ENCODE measurements at regions of chr22 and their contacts with region 1.

Region 1: GRCh38 chr22:38201710-38202436 is at the start of gene MAFF:
- DNase-seq: peak; percentile 99
- H3K4me3 ChIP-seq: peak within 1 kb of the TSS; percentile 80 to 92 (median 86)
- H3K27ac ChIP-seq: peak within 1 kb of the TSS; percentile 97 to 100 (median 98)
- H3K4me1 ChIP-seq: peaks cover 0 to 41% (median 37%) of the 10 kb centered on the region in 4 donors
- H3K27me3 ChIP-seq: no peaks in the 10 kb centered on the region
- CTCF ChIP-seq: no peak
- EP300 ChIP-seq: peak in 2 of 4 donors; percentile 46 to 51
- POLR2A ChIP-seq: peak; percentile 88 to 90
- total RNA-seq, gene MAFF: 15.3 to 104 (median 26.1) TPM

Region 2: DNA sequence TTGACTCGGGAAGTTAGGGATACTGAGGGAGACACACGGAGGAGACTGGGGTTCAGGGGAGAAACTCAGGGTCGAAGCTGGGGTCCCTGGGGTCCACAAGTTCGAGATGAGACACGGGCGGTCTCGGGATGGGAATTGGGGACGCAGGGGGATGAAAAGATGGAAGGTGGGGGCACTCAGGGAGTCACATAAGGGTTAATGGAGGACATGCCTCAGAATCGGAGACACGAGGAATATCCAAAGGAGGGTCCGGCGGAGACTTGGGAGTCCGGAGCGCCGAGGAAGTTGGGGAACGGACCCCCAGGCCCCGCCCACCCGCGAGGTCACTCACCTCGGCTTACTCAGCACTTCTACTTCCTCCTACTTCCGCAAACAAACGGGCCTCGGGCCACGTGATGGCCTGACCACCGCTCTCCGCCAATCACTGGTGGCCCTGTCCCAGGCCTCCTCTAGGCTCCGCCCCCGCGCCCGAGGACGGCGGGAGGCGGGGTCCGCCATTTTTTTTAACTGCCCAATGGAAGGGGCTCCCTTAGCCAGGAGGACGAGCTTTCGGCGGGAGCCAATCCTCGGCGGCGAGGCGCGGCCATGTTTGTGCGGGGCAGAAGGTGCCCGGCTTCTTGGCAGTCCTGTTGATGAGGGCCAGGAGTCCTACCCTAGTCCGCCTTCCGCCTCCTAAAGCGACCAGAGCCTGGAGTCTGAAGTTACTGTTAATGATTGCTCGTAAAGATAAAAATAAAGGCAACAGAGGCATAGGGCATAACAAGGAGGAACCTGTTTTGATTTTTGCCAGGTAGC is 20.2 kb before region 1 on chr22 and contains the start of gene PLA2G6:
- intact Hi-C with region 1: loop called (anchors 2 kb)
- DNase-seq: peak; percentile 99
- H3K4me3 ChIP-seq: peak within 1 kb of the TSS; percentile 36 to 64 (median 58)
- H3K27ac ChIP-seq: peak within 1 kb of the TSS; percentile 79 to 92 (median 87)
- H3K4me1 ChIP-seq: peaks cover 0 to 31% (median 29%) of the 10 kb centered on the region in 4 donors
- H3K27me3 ChIP-seq: no peaks in the 10 kb centered on the region
- CTCF ChIP-seq: no peak
- EP300 ChIP-seq: peak in 1 of 4 donors; percentile 37
- POLR2A ChIP-seq: no peak
- total RNA-seq, gene PLA2G6: 10.7 to 36.2 (median 26.5) TPM

Region 3: GRCh38 chr22:38272373-38273134 is 70.7 kb after region 1 on chr22 and contains the start of gene TMEM184B:
- intact Hi-C with region 1: loop called (anchors 5 kb)
- DNase-seq: peak; percentile 89
- H3K4me3 ChIP-seq: peak within 1 kb of the TSS; percentile 76 to 99 (median 94)
- H3K27ac ChIP-seq: peak within 1 kb of the TSS; percentile 87 to 97 (median 92)
- H3K4me1 ChIP-seq: peaks cover 0 to 53% (median 49%) of the 10 kb centered on the region in 4 donors
- H3K27me3 ChIP-seq: no peaks in the 10 kb centered on the region
- CTCF ChIP-seq: no peak
- EP300 ChIP-seq: no peak
- POLR2A ChIP-seq: peak in 1 of 2 donors; percentile 50
- total RNA-seq, gene TMEM184B: 42.6 to 96.4 (median 68.1) TPM

Region 4: DNA sequence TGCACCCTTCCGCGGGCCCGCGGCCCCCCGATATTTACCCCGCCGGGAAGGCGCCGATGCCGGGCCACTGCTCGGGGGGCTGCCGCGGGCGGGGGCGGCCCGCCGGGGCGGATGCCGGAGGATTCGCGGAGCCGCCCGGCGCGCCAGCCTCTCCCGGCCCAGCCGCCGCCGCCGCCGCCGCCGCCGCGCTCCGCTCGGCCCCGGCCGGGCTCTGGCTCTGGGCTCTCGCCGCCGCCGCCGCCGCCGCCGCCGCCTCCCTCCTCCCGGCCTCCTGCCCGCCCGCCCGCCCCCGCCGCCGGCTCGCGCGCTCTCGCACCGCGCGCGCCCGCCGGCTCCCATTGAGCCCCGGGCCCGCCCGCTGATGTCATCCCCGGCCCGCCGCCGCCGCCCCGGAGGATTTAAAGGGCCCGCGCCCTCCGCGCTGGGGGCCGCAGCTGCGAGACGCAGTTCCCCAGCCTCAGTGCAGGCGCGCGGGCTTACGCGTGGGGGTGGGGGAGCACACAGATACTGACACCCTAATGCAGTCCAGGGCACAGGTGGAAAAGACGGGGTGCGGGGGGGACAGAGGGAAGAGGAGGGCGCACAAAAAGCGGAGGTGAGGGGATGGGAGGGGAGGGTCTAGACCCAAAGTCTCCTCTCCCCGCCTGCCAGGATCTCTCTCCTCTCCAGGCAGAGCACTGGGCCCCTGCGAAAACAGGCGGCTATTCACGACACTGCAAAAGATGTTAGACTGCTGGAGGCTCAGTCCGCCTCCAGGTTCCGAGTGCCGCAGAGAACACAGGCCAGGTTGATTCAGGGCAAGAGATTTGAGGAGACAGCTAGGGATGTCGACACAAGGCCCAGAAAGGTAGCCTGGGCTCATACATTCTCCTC is 115.5 kb after region 1 on chr22 and contains the start of gene CSNK1E:
- intact Hi-C with region 1: loop called (anchors 1 kb)
- DNase-seq: peak; percentile 91
- H3K4me3 ChIP-seq: peak within 1 kb of the TSS; percentile 62 to 96 (median 84)
- H3K27ac ChIP-seq: peak within 1 kb of the TSS; percentile 96 to 99 (median 98)
- H3K4me1 ChIP-seq: peaks cover 0 to 49% (median 48%) of the 10 kb centered on the region in 4 donors
- H3K27me3 ChIP-seq: no peaks in the 10 kb centered on the region
- CTCF ChIP-seq: no peak
- EP300 ChIP-seq: no peak
- POLR2A ChIP-seq: peak in 1 of 2 donors; percentile 31
- total RNA-seq, gene CSNK1E: 60.6 to 116 (median 73.3) TPM

Region 5: DNA sequence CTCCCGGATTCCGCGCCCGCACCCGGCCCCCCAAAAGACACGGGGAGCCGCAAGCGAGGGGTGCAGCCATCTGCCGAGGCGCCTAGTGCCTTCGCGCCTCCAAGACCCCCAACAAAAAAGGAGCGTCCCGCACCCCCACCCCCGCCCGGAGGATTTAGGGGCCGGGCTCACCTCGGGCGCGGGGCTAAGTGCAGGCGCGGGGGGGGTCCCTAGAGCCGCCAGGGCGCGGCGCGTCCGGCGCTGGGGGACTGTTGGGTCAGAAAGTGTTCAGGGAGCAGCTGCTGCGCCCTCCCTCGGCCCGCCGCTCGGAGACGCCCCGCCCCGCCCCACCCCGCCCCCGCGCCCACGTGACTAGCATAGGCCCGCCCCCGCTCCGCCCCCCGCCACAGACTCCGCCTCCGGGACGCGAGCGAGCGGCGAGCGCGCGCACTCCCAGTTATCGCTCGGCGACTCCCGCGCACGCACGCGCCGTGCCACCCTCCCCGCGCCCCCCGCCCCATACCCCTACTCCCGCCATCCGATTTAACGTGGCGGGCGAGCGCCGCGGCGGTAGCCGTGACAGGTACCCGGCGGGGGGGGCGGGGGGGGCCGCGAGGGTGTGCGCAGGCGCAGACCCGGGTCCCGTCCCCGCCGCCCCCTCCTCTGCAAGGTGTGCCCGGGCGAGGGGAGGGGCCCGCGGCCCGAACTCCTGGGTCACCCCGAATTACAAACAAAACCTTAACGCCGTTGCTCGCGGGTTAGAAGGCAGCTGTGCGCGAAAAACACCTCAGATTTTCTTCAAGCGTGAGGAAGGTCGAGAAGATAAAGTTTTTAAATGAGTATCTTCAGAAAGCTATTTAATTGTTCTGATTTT is 197.0 kb after region 1 on chr22:
- intact Hi-C with region 1: loop called (anchors 5 kb)
- DNase-seq: peak; percentile 91
- H3K4me3 ChIP-seq: peak overlapping the region; percentile 59 to 95 (median 83)
- H3K27ac ChIP-seq: peak overlapping the region; percentile 91 to 96 (median 92)
- H3K4me1 ChIP-seq: peaks cover 0 to 25% (median 16%) of the 10 kb centered on the region in 4 donors
- H3K27me3 ChIP-seq: no peaks in the 10 kb centered on the region
- CTCF ChIP-seq: no peak
- EP300 ChIP-seq: no peak
- POLR2A ChIP-seq: peak; percentile 74 to 76

Region 6: GRCh38 chr22:38506118-38506962 is 304.5 kb after region 1 on chr22 and contains the start of gene DDX17:
- intact Hi-C with region 1: loop called (anchors 5 kb)
- DNase-seq: peak; percentile 98
- H3K4me3 ChIP-seq: peak within 1 kb of the TSS; percentile 73 to 94 (median 90)
- H3K27ac ChIP-seq: peak within 1 kb of the TSS; percentile 98 to 100 (median 99)
- H3K4me1 ChIP-seq: peaks cover 0 to 46% (median 45%) of the 10 kb centered on the region in 4 donors
- H3K27me3 ChIP-seq: no peaks in the 10 kb centered on the region
- CTCF ChIP-seq: peak in 1 of 4 experiments; percentile 10
- EP300 ChIP-seq: no peak
- POLR2A ChIP-seq: peak; percentile 41 to 64
- total RNA-seq, gene DDX17: 504 to 630 (median 591) TPM